HepG2 (cell line): ENCODE measurements at regions of chr3 and their contacts with region 1.

Region 1: GRCh38 chr3:33440323-33441232 is at the start of gene UBP1:
- DNase-seq: peak; percentile 100
- ATAC-seq: peak; percentile 89
- H3K4me3 ChIP-seq: peak within 1 kb of the TSS; percentile 95 to 99 (median 95)
- H3K27ac ChIP-seq: peak within 1 kb of the TSS; percentile 97
- H3K4me1 ChIP-seq: peaks cover 53% of the 10 kb centered on the region
- H3K27me3 ChIP-seq: no peaks in the 10 kb centered on the region
- CTCF ChIP-seq: no peak
- EP300 ChIP-seq: peak in 1 of 2 experiments; percentile 26; a peak in 1 of 4 replicates
- POLR2A ChIP-seq: peak; percentile 93 to 98
- RAD21 ChIP-seq: no peak; the same call in 1 of the 2 replicates
- total RNA-seq, gene UBP1: 48.3 and 56.7 TPM in 2 replicates

Region 2: GRCh38 chr3:32616267-32616963 is 824.2 kb before region 1 on chr3:
- CTCF ChIA-PET with region 1: no interaction called
- POLR2A ChIA-PET with region 1: no interaction called
- in situ Hi-C with region 1: no loop called
- intact Hi-C with region 1: no loop called
- DNase-seq: no peak
- ATAC-seq: no peak
- H3K4me3 ChIP-seq: no peak overlapping the region
- H3K27ac ChIP-seq: no peak overlapping the region
- H3K4me1 ChIP-seq: no peaks in the 10 kb centered on the region
- H3K27me3 ChIP-seq: peaks cover 0 to 2% of the 10 kb centered on the region in 2 experiments; a peak in 1 of 5 replicates
- CTCF ChIP-seq: no peak
- EP300 ChIP-seq: no peak
- POLR2A ChIP-seq: no peak
- RAD21 ChIP-seq: no peak

Region 3: DNA sequence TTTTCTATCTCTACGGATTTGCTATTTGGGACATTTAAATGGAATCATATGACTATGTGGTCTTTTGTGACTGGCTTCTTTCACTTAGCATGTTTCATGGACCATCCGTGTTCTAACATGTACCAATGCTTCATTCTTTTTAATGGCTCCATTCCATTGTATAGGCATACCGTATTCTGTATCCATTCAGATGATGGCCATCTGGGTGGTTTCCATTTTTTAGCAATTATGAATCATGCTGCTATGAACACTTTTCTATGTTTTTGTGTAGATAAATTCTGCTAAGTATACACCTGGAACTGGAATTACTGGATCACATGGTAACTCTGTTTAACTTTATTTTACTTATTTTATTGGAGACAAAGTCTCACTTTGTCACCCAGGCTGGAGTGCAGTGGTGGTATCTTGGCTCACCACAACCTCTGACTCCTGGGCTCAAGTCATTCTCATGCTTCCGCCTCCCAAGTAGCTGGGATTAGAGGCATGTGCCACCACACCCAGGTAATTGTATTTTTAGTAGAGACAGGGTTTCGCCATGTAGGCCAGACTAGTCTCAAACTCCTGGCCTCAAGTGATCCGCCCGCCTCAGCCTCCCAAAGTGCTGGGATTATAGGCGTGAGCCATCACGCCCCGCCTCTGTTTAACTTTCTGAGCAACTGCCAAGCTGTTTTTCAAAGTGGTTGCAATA is 13.8 kb before region 1 on chr3:
- CTCF ChIA-PET with region 1: no interaction called
- POLR2A ChIA-PET with region 1: interaction called, 35 read pairs
- in situ Hi-C with region 1: no loop called
- intact Hi-C with region 1: no loop called
- DNase-seq: no peak
- ATAC-seq: no peak
- H3K4me3 ChIP-seq: no peak overlapping the region
- H3K27ac ChIP-seq: no peak overlapping the region
- H3K4me1 ChIP-seq: peaks cover 37% of the 10 kb centered on the region
- H3K27me3 ChIP-seq: no peaks in the 10 kb centered on the region
- CTCF ChIP-seq: no peak
- EP300 ChIP-seq: no peak
- POLR2A ChIP-seq: no peak
- RAD21 ChIP-seq: no peak

Region 4: GRCh38 chr3:33467786-33468185 is 27.2 kb after region 1 on chr3:
- CTCF ChIA-PET with region 1: no interaction called
- POLR2A ChIA-PET with region 1: interaction called, 11 read pairs
- in situ Hi-C with region 1: no loop called
- intact Hi-C with region 1: no loop called
- DNase-seq: peak; percentile 16
- ATAC-seq: no peak
- H3K4me3 ChIP-seq: no peak overlapping the region
- H3K27ac ChIP-seq: no peak overlapping the region
- H3K4me1 ChIP-seq: peaks cover 9% of the 10 kb centered on the region
- H3K27me3 ChIP-seq: no peaks in the 10 kb centered on the region
- CTCF ChIP-seq: no peak
- EP300 ChIP-seq: no peak
- POLR2A ChIP-seq: no peak
- RAD21 ChIP-seq: no peak

Region 5: GRCh38 chr3:33578325-33579177 is 138.0 kb after region 1 on chr3:
- CTCF ChIA-PET with region 1: no interaction called
- POLR2A ChIA-PET with region 1: no interaction called
- in situ Hi-C with region 1: no loop called
- intact Hi-C with region 1: loop called (anchors 5 kb)
- DNase-seq: peak; percentile 83
- ATAC-seq: peak; percentile 87
- H3K4me3 ChIP-seq: no peak overlapping the region
- H3K27ac ChIP-seq: peak overlapping the region; percentile 61
- H3K4me1 ChIP-seq: peaks cover 70% of the 10 kb centered on the region
- H3K27me3 ChIP-seq: no peaks in the 10 kb centered on the region
- CTCF ChIP-seq: no peak
- EP300 ChIP-seq: peak in 1 of 2 experiments; percentile 62; a peak in 2 of 4 replicates
- POLR2A ChIP-seq: no peak
- RAD21 ChIP-seq: no peak

Region 6: DNA sequence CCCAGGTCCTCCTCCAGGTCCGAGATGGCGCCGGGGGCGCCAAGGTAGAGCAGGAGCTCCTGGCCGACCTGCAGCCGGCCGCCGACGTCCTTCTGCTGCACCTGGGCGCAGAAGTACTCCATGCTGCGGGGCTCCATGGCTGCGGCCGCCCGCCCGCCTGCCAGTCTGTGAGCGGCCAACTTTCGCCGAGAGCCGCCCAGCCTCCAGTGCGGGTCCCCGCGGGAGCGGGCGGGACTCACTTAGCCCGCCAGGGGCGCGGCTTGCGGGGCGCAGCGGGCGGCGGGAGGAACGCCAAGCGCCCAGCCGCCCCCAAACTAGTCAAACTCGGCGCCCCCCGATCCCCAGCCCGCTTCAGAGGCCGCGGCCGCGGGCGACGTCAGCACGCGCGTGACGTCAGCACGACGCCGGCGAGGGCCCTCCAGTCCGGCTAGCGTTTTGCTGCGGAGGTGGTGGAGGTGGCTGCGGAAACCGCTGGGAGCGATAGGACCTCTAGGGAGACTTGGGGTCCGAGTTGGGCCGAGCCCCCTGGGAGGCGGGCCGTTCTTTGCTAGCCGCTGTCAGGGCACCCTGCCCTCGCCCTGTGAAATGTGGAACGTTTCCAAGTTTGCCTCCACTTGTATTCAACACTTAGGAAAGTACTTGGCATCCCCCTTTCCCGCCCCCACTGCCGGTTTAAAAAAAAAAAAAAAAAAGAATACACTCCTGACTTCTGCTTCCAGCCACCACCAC is 277.5 kb after region 1 on chr3 and contains the start of gene CLASP2:
- CTCF ChIA-PET with region 1: no interaction called
- POLR2A ChIA-PET with region 1: interaction called, 4 read pairs
- in situ Hi-C with region 1: no loop called
- intact Hi-C with region 1: loop called (anchors 5 kb)
- DNase-seq: peak; percentile 76
- ATAC-seq: peak; percentile 95
- H3K4me3 ChIP-seq: peak within 1 kb of the TSS; percentile 87 to 92 (median 89)
- H3K27ac ChIP-seq: peak within 1 kb of the TSS; percentile 94
- H3K4me1 ChIP-seq: peaks cover 30% of the 10 kb centered on the region
- H3K27me3 ChIP-seq: no peaks in the 10 kb centered on the region; a peak in 1 of 5 replicates
- CTCF ChIP-seq: no peak
- EP300 ChIP-seq: no peak
- POLR2A ChIP-seq: peak; percentile 40 to 69; a peak in 2 of 4 replicates
- RAD21 ChIP-seq: no peak
- total RNA-seq, gene CLASP2: 30.6 and 34.8 TPM in 2 replicates

Region 7: DNA sequence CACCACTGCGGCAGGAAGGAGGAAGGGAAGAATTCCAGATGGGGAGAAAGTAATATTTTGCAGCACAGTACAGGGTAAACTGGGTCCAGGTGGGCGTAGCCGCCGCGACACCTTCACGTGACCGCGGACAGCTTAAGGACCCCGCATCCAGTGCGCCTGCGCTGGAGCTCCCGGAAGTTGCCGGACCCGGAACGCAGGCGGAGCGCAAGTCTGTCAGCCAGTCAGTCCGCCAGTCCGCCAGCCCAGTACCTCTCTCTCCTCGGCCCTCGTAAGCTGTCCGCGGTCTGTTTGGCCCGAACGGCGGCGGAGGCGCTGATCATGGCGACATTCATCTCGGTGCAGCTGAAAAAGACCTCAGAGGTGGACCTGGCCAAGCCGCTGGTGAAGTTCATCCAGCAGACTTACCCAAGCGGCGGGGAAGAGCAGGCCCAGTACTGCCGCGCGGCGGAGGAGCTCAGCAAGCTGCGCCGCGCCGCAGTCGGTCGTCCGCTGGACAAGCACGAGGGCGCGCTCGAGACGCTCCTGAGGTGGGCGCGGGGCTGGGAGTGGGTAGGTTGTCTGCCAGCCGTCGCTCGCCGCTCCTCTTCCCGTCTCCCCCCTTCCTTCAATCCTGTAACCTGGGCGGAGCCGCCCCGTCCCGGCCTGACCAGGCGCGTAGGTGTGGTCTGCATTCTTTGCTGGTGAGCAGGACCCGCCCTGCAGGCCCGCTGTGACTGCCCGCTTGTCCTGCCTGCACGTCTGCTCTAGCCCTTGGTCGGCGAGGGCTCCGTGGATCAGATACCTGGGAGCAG is 358.0 kb after region 1 on chr3 and contains the start of gene PDCD6IP:
- CTCF ChIA-PET with region 1: no interaction called
- POLR2A ChIA-PET with region 1: interaction called, 11 read pairs
- in situ Hi-C with region 1: no loop called
- intact Hi-C with region 1: loop called (anchors 10 kb)
- DNase-seq: peak; percentile 89
- ATAC-seq: peak; percentile 98
- H3K4me3 ChIP-seq: peak within 1 kb of the TSS; percentile 94 to 97 (median 94)
- H3K27ac ChIP-seq: peak within 1 kb of the TSS; percentile 93
- H3K4me1 ChIP-seq: peaks cover 48% of the 10 kb centered on the region
- H3K27me3 ChIP-seq: no peaks in the 10 kb centered on the region; a peak in 1 of 5 replicates
- CTCF ChIP-seq: peak; percentile 53
- EP300 ChIP-seq: no peak; a peak in 2 of 4 replicates
- POLR2A ChIP-seq: peak; percentile 96 to 97
- RAD21 ChIP-seq: peak; percentile 36; the same call in 1 of the 2 replicates
- total RNA-seq, gene PDCD6IP: 62.5 and 116 TPM in 2 replicates